Mucosa of descending colon (tissue), 3 donors: ENCODE measurements at regions of chr3 and their contacts with region 1.

Region 1: GRCh38 chr3:186540221-186540834 is 3.9 kb downstream of the CRYGS start:
- DNase-seq: peak in 2 of 3 donors; percentile 49 to 93
- ATAC-seq: peak; percentile 96
- H3K4me3 ChIP-seq: no peak overlapping the region
- H3K4me1 ChIP-seq: no peaks in the 10 kb centered on the region
- CTCF ChIP-seq: peak; percentile 24

Region 2: DNA sequence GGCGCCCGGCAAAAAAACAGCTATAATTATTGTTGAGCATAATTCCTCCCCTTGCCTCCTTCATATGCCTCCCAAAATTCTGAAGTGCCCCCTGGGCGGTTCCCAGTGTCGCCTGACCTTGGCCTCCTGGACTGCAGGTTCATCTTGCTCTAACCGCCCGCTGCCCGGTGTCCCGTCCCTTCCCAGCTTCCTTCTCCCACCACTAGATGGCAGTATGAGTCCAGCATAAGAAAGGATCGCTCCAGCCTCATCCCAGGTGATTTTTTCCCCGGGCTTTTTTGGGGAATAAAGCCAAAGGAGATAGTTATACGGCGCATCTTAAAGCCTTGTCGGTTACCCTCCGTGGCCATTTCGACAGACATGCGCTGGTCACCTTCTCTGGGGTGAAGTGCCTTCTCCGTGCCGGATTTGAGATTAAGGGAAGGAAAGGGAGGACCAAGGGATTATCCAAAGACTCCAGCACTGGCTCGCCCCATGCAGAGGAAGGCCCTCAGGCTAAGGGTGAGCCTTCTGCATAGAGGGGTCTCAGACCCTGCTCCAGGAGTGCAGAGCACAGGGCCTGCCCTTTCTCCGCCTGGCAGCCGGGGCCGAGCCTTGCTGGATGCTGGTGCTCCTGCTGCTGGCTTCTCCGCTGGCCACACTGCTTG is 556.7 kb before region 1 on chr3:
- intact Hi-C with region 1: loop called (anchors 5 to 10 kb)
- DNase-seq: peak in 2 of 3 donors; percentile 66 to 87
- ATAC-seq: peak; percentile 95
- H3K4me3 ChIP-seq: no peak overlapping the region
- H3K4me1 ChIP-seq: no peaks in the 10 kb centered on the region
- CTCF ChIP-seq: peak; percentile 89

Region 3: GRCh38 chr3:186247821-186248814 is 292.2 kb before region 1 on chr3:
- intact Hi-C with region 1: no loop called
- DNase-seq: no peak
- ATAC-seq: no peak
- H3K4me3 ChIP-seq: no peak overlapping the region
- H3K4me1 ChIP-seq: no peaks in the 10 kb centered on the region
- CTCF ChIP-seq: no peak

Region 4: GRCh38 chr3:186259612-186260383 is 280.5 kb before region 1 on chr3:
- intact Hi-C with region 1: loop called (anchors 5 kb)
- DNase-seq: peak; percentile 73 to 83 (median 77)
- ATAC-seq: peak; percentile 93
- H3K4me3 ChIP-seq: no peak overlapping the region
- H3K4me1 ChIP-seq: no peaks in the 10 kb centered on the region
- CTCF ChIP-seq: peak; percentile 90

Region 5: GRCh38 chr3:186320862-186321568 is 219.3 kb before region 1 on chr3:
- intact Hi-C with region 1: no loop called
- DNase-seq: no peak
- ATAC-seq: no peak
- H3K4me3 ChIP-seq: no peak overlapping the region
- H3K4me1 ChIP-seq: no peaks in the 10 kb centered on the region
- CTCF ChIP-seq: no peak

Region 6: DNA sequence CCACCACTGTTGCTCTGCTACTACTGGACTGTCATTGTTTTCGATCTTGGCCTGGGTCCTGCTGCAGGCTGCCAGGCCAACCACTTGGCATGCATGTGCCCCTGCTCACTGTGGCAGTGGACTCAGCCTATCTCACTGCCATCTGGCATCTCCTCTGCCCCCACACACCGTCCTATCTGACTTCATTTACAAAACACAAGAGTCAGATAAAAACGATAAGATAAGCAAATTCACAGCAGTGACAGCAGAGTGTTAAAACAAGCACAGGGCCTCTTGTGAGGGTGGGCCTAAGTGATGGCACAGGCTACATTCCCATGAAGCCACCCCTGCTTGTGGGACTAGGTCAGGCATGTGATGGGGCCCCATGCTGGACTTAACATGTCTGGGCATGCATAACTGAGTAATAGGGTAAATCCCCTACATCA is 64.3 kb before region 1 on chr3:
- intact Hi-C with region 1: no loop called
- DNase-seq: no peak
- ATAC-seq: no peak
- H3K4me3 ChIP-seq: no peak overlapping the region
- H3K4me1 ChIP-seq: no peaks in the 10 kb centered on the region
- CTCF ChIP-seq: no peak

Region 7: GRCh38 chr3:186630950-186631641 is 90.8 kb after region 1 on chr3:
- intact Hi-C with region 1: no loop called
- DNase-seq: no peak
- ATAC-seq: no peak
- H3K4me3 ChIP-seq: no peak overlapping the region
- H3K4me1 ChIP-seq: no peaks in the 10 kb centered on the region
- CTCF ChIP-seq: no peak